ENCODE measurements at regions of chr2 and their contacts with region 1.

Region 1: DNA sequence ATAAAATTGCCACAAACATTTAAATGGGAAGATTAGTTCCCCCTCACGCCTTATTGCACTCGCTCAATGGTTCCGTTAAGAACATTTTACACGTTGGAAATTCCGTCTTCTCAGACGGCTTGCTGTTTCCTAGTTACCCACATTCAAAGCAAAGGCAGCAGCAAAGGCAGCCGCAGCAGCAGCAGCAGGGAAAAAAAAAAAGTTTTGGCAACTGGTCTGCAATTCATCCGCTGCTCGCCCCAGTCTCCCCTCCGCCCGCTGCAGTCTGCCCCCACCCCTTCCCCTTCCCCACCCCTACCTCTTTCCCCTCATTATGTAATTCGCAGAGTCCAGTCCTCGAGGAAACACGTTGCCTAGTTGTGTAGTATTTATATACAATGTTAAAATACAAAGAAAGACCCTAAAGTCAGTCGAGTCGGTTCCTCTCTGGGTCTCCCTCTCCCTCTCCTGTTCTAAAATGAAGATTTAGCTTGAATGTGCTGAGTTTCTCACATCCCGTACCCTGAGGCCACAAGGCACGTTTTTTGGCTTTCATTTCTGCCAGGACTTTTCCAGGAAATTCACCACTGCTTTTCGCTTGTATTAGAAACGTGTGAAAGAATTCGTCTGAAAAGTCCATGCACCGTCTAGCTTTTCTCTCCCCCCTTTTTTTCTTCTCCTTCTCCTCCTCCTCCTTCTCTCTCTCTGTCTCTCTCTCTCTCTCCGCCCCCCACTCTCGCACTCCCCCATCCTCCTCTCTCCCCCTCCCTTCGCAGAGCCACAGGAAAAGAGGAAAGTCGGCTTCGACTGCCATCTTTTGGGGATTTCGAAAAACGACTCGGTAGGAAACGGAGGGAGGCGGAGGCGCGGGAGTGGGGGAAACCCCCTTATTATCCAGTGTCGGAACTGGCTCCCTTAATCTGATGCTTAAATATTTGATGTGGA is 140.0 kb downstream of the MEIS1 start:
- DNase-seq: peak in 1 of 2 donors; percentile 94
- H3K4me3 ChIP-seq: peak overlapping the region; percentile 53 to 80
- H3K27ac ChIP-seq: peak overlapping the region; percentile 95
- H3K4me1 ChIP-seq: peaks cover 17% of the 10 kb centered on the region
- H3K27me3 ChIP-seq: no peaks in the 10 kb centered on the region
- CTCF ChIP-seq: peak in 2 of 3 experiments; percentile 3 to 12
- POLR2A ChIP-seq: no peak

Region 2: GRCh38 chr2:66389651-66390131 is 185.3 kb before region 1 on chr2:
- intact Hi-C with region 1: no loop called
- DNase-seq: no peak
- H3K4me3 ChIP-seq: no peak overlapping the region
- H3K27ac ChIP-seq: peak overlapping the region; percentile 68
- H3K4me1 ChIP-seq: peaks cover 39% of the 10 kb centered on the region
- H3K27me3 ChIP-seq: no peaks in the 10 kb centered on the region
- CTCF ChIP-seq: no peak
- POLR2A ChIP-seq: no peak

Region 3: DNA sequence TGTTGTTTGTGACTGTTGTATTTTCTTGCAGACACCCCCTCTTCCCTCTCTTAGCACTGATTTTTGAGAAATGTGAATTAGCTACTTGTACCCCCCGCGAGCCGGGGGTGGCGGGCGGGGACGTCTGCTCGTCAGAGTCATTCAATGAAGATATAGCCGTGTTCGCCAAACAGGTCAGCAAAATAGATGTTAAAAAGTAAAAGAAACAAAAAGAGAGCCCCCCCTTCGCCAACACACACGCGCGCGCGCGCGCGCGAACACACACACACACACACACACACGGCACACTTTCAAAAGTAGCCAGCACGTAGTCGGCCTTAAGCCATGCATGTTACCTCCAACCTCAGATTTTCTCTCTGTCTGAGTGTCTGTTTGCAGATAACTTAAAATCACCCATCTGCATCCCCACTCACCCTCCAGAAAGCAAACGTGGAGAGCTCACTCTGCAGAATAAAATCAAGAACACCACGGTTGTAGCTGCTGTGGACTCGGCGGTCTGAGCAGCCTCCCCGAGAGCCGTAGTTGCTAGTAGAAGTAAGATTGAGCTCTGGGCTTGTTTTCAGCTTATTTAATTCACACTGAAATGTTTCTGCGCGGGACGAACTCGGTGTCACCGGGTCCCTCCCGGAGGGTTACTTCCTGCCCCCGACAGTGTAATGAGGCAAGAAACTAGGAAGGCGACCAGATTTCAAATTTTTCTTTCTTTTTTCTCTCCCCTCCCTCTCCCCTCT is 135.0 kb before region 1 on chr2:
- intact Hi-C with region 1: loop called (anchors 2 kb)
- DNase-seq: no peak
- H3K4me3 ChIP-seq: peak overlapping the region; percentile 72 to 77
- H3K27ac ChIP-seq: peak overlapping the region; percentile 98
- H3K4me1 ChIP-seq: peaks cover 18% of the 10 kb centered on the region
- H3K27me3 ChIP-seq: no peaks in the 10 kb centered on the region
- CTCF ChIP-seq: no peak
- POLR2A ChIP-seq: no peak

Region 4: GRCh38 chr2:66693076-66693965 is 118.4 kb after region 1 on chr2:
- intact Hi-C with region 1: loop called (anchors 2 kb)
- DNase-seq: no peak
- H3K4me3 ChIP-seq: peak overlapping the region; percentile 30 to 43
- H3K27ac ChIP-seq: peak overlapping the region; percentile 68
- H3K4me1 ChIP-seq: no peaks in the 10 kb centered on the region
- H3K27me3 ChIP-seq: no peaks in the 10 kb centered on the region
- CTCF ChIP-seq: no peak
- POLR2A ChIP-seq: no peak

Region 5: DNA sequence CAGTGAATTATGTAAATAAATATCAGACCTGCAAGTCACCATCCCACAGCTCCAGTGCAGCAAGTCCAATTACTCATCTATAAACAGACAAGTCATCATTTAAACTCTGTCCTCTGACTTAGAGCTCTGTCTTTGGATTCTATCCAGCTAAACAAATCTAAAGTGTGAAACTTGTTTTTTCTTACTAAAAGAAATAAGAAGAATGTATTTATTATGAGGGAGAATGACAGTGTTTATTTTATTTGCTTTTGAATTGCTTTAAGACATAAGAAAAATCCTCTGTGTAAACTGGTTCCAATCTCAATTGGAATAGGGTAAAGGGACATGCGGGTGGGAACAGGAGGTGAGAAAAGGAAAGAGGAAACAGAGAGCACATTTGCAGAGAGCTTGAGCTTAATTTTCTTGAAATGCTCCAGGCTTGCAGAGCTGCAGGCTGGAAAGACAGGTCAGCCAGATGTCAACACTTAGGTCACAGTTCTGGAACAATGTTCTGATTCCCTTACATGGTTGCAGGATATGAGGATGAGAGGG is 215.8 kb after region 1 on chr2:
- intact Hi-C with region 1: no loop called
- DNase-seq: no peak
- H3K4me3 ChIP-seq: no peak overlapping the region
- H3K27ac ChIP-seq: no peak overlapping the region
- H3K4me1 ChIP-seq: peaks cover 24% of the 10 kb centered on the region
- H3K27me3 ChIP-seq: no peaks in the 10 kb centered on the region
- CTCF ChIP-seq: no peak
- POLR2A ChIP-seq: no peak

Region 6: GRCh38 chr2:66851449-66851872 is 276.5 kb after region 1 on chr2:
- intact Hi-C with region 1: loop called (anchors 5 kb)
- DNase-seq: no peak
- H3K4me3 ChIP-seq: no peak overlapping the region
- H3K27ac ChIP-seq: no peak overlapping the region
- H3K4me1 ChIP-seq: peaks cover 4% of the 10 kb centered on the region
- H3K27me3 ChIP-seq: no peaks in the 10 kb centered on the region
- CTCF ChIP-seq: no peak
- POLR2A ChIP-seq: no peak

Region 7: GRCh38 chr2:67650291-67651133 is 1075.5 kb after region 1 on chr2:
- intact Hi-C with region 1: loop called (anchors 5 kb)
- DNase-seq: peak in 1 of 2 donors; percentile 96
- H3K4me3 ChIP-seq: no peak overlapping the region
- H3K27ac ChIP-seq: peak overlapping the region; percentile 70
- H3K4me1 ChIP-seq: peaks cover 22% of the 10 kb centered on the region
- H3K27me3 ChIP-seq: no peaks in the 10 kb centered on the region
- CTCF ChIP-seq: peak in 2 of 3 experiments; percentile 59 to 71
- POLR2A ChIP-seq: no peak